H1 (cell line): ENCODE measurements at regions of chr11 and their contacts with region 1.

Region 1: DNA sequence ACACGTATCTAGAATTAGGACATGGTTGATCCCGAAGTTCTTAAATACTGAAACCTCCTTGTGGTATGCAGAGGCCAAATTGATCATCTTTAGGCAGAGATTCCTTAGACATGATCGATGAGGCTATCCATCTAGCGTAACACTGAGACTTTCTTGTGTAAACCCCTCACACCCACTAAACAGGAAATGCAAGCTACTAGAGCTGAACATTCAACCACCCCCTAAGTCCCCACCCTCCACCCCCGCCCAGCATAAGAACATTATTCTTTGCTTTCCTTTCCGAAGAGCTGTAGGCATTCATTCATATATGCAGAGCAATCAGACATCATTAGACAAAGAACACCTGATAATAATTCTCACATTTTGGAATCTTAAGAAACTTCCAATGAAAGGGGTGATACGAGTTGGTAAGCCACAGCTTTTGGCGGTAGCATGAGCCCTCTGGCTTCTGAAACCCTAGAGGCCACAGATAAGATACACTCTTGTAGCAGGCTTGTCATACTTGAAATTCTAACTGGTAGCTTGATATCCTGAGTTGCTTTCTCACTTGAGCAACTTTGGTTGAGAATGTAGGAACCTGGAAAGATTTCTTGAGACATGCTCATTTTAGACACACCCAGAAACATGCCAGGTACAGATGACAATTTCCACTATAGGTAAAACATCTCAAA is 42.2 kb downstream of the FLI1 start:
- DNase-seq: no peak
- H3K4me3 ChIP-seq: no peak overlapping the region
- H3K27ac ChIP-seq: no peak overlapping the region
- H3K4me1 ChIP-seq: peaks cover 7 to 17% (median 16%) of the 10 kb centered on the region in 4 experiments; a peak in 5 of 7 replicates
- H3K27me3 ChIP-seq: peaks cover 0 to 2% (median 0%) of the 10 kb centered on the region in 4 experiments; a peak in 2 of 7 replicates
- CTCF ChIP-seq: no peak
- EP300 ChIP-seq: no peak
- POLR2A ChIP-seq: no peak
- RAD21 ChIP-seq: no peak

Region 2: DNA sequence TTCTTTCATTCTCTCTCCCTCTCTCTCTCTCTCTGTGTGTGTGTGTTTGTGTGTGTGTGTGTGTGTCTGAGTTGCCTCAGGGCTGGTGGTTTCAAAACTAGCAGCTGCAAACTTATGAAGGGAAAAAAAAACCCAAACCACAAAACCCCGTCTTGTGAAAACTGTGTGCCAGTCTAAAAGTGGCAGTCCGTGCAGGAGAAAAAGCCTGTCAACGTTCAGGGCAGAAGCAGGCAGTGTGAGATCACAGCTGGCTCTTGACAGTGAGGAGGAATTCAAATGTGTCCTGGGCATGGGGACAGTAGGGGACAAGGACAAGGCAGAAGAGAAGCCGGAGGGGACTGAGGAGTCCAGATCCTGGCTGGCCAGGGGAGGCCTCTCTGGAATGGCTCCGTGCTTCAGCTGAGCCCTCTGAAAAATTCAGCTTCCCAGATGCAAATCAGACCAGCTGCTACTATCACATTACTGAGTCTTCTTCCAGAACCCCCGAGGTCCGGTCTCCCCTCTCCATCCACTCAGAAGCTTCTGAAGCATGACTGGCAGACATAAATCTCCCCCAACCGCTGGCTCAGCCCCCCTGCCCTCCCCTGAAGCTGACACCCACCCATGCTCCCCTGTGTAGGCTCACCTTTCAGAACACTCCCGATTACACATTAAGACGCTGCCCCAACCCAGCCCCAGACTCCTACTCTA is 10.3 kb before region 1 on chr11:
- CTCF ChIA-PET with region 1: interaction called, 15 read pairs
- POLR2A ChIA-PET with region 1: interaction called, 3 read pairs
- DNase-seq: no peak
- H3K4me3 ChIP-seq: no peak overlapping the region
- H3K27ac ChIP-seq: no peak overlapping the region
- H3K4me1 ChIP-seq: peaks cover 0 to 3% (median under 1%) of the 10 kb centered on the region in 4 experiments; a peak in 2 of 7 replicates
- H3K27me3 ChIP-seq: 0 out of 7 replicates have a peak, but pooled peaks cover 0 to 2% (median 0%) of the 10 kb centered on the region in 4 experiments
- CTCF ChIP-seq: no peak
- EP300 ChIP-seq: no peak
- POLR2A ChIP-seq: no peak
- RAD21 ChIP-seq: no peak